Activated CD4-positive, alpha-beta memory T cell treated with anti-CD3 and anti-CD28 coated beads, Interleukin-2, amount 10 ng/mL, durations not matched to agents 7 days and 5 days (primary cell): ENCODE measurements at regions of chr16 and their contacts with region 1.

Region 1: GRCh38 chr16:89507834-89508590 is at the start of gene SPG7:
- DNase-seq: peak; percentile 92
- H3K4me3 Mint-ChIP-seq: peak within 1 kb of the TSS; percentile 93
- H3K27ac Mint-ChIP-seq: peak within 1 kb of the TSS; percentile 90
- H3K4me1 Mint-ChIP-seq: peaks cover 43% of the 10 kb centered on the region
- H3K27me3 Mint-ChIP-seq: no peaks in the 10 kb centered on the region
- total RNA-seq, gene SPG7: 73.9 to 77.9 TPM

Region 2: DNA sequence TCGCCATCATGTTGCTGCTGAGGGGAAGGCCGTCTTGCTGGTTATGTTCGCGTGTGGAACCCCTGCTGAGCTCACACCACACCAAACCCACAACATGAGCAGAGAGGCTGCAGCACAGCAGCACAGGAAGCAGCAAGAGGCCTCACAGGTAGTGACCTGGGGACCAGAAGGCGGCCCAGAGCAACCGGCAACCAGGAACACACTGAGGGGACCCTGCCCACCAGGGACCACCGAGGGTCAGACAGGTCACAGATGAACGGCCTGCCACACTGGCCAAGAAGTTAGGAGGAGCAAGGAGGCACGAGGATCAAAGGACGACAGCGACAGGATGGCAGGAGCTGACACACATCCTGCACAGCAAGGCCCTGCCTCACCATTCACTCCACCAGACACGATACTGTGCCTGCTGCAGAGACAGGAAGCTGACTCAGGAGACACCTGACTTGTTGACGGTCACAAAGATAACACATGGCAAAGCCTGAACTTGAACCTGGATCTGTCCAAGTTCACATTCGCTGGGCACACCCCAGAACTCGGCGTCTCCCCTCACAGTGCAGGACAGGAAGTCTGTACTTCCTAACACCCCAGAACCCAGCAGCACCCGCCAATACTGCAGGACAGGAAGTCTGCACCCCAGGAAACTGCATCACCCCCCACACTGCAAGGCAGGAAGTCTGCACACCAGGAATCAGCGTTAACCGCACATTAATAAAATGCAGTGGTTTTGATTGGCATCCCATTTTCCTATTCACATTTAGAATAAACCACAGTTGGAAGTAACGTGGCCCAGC is 192.0 kb before region 1 on chr16:
- CTCF ChIA-PET with region 1: interaction called, 22 read pairs
- POLR2A ChIA-PET with region 1: interaction called, 38 read pairs
- DNase-seq: peak; percentile 87
- H3K4me3 Mint-ChIP-seq: peak overlapping the region; percentile 70
- H3K27ac Mint-ChIP-seq: peak overlapping the region; percentile 99
- H3K4me1 Mint-ChIP-seq: peaks cover 95% of the 10 kb centered on the region
- H3K27me3 Mint-ChIP-seq: no peaks in the 10 kb centered on the region

Region 3: GRCh38 chr16:89361751-89362539 is 146.1 kb before region 1 on chr16:
- CTCF ChIA-PET with region 1: interaction called, 3 read pairs
- POLR2A ChIA-PET with region 1: interaction called, 26 read pairs
- DNase-seq: peak; percentile 39
- H3K4me3 Mint-ChIP-seq: peak overlapping the region; percentile 65
- H3K27ac Mint-ChIP-seq: peak overlapping the region; percentile 94
- H3K4me1 Mint-ChIP-seq: peaks cover 99% of the 10 kb centered on the region
- H3K27me3 Mint-ChIP-seq: no peaks in the 10 kb centered on the region

Region 4: DNA sequence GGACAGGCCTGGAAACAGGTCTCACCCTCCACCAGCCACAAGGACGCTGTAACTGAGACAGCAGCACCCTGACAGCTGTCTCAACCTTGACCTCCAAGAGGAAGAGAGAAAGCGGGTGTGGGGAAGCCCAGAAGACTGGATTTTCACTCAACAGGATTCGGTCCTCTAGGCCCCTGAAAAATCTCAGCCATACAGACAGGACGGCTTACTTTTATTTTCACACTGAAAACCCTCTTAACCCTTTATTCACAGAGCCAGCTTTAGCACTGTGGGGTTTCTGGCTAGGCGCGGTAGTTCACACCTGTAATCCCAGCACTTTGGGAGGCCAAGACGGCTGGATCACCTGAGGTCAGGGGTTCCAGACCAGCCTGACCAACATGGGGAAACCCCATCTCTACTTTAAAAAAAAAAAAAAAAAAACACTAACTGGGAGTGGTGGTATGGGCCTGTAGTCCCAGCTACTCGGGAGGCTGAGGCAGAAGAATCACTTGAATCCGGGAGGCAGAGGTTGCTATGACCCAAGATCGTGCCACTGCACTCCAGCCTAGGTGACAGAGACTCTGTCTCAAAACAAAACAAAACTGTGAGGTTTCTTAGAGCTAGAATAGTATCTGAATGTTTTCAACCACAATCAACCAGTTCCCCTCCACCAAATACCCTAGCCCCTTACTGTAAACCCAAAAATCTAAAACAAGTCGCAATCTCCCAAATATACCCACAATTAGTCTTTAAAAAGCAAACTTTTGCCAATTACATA is 22.9 kb before region 1 on chr16:
- CTCF ChIA-PET with region 1: interaction called, 4 read pairs
- POLR2A ChIA-PET with region 1: interaction called, 158 read pairs
- DNase-seq: peak; percentile 36
- H3K4me3 Mint-ChIP-seq: peak overlapping the region; percentile 60
- H3K27ac Mint-ChIP-seq: peak overlapping the region; percentile 75
- H3K4me1 Mint-ChIP-seq: peaks cover 81% of the 10 kb centered on the region
- H3K27me3 Mint-ChIP-seq: no peaks in the 10 kb centered on the region

Region 5: GRCh38 chr16:89490387-89491237 is 17.4 kb before region 1 on chr16 and contains the start of gene ANKRD11:
- CTCF ChIA-PET with region 1: interaction called, 4 read pairs
- POLR2A ChIA-PET with region 1: interaction called, 158 read pairs
- DNase-seq: peak; percentile 99
- H3K4me3 Mint-ChIP-seq: peak within 1 kb of the TSS; percentile 92
- H3K27ac Mint-ChIP-seq: peak within 1 kb of the TSS; percentile 94
- H3K4me1 Mint-ChIP-seq: peaks cover 51% of the 10 kb centered on the region
- H3K27me3 Mint-ChIP-seq: no peaks in the 10 kb centered on the region
- total RNA-seq, gene ANKRD11: 199 to 208 TPM

Region 6: DNA sequence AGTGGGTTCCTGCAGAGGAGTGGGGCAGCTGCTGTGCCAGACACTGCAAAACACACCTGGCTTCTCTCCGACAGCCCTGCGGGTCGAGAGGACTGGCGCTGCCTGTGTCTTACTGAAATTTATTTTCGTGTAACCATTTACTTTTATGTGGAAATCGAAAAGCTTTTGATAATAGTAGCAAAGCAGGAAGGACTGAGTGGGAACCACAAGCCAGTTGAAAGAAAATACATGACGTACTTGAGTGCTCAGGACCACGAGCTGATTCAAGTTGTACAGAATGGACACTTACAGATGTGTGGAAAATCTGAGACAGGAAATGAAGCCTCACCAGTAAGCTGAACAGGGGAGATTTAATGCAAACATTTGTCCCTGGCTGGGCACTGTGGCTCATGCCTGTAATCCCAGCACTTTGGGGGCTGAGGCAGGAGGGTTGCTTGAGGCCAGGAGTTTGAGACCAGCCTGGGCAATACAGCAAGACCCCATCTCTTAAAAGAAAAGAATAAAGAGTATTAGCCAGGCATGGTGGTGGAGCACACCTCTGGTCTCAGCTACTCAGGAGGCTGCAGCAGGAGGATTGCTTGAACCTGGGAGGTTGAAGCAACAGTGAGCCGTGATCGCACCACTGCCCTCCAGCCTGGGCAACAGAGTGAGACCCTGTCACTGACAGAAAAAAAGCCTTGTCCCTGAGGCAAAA is 41.1 kb after region 1 on chr16:
- CTCF ChIA-PET with region 1: interaction called, 3 read pairs
- POLR2A ChIA-PET with region 1: interaction called, 11 read pairs
- DNase-seq: no peak
- H3K4me3 Mint-ChIP-seq: no peak overlapping the region
- H3K27ac Mint-ChIP-seq: peak overlapping the region; percentile 52
- H3K4me1 Mint-ChIP-seq: peaks cover 7% of the 10 kb centered on the region
- H3K27me3 Mint-ChIP-seq: no peaks in the 10 kb centered on the region

Region 7: DNA sequence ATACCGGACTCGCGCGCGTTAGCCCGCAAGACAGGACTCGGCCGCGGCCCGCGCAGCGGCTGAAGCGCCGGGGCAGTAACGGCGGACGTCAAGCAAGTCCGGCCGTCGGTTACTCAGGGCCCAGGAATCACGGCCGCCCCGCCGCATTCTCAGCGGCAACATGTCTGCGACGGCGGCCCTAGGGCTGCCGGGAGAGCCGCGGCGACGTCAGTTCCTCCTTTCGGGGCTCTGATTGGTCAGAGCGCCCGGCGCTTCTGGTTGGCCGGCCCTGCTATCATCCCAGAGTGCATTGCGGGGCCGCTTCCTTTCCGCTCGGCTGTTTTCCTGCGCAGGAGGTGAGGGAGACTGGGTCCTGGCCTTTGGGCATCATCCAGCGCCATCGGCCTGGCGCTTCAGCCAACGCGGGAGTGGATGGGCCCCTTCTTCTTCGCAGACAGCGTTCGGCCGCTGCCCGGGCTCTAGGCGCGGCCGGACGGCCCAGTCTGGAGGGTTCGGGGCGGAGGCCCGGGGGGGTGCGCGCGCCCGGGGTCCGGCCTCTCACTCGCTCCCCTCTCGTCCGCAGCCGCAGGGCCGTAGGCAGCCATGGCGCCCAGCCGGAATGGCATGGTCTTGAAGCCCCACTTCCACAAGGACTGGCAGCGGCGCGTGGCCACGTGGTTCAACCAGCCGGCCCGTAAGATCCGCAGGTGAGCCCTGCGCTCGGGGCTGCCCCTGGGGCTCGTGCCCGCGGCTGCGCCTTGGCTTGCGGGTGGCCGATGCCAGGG is 52.5 kb after region 1 on chr16 and contains the start of gene RPL13:
- CTCF ChIA-PET with region 1: interaction called, 3 read pairs
- POLR2A ChIA-PET with region 1: interaction called, 13 read pairs
- DNase-seq: peak; percentile 94
- H3K4me3 Mint-ChIP-seq: peak within 1 kb of the TSS; percentile 98
- H3K27ac Mint-ChIP-seq: peak within 1 kb of the TSS; percentile 99
- H3K4me1 Mint-ChIP-seq: peaks cover 54% of the 10 kb centered on the region
- H3K27me3 Mint-ChIP-seq: no peaks in the 10 kb centered on the region
- total RNA-seq, gene RPL13: 2,083 to 2,114 TPM